ENCODE measurements at regions of chrX and their contacts with region 1.

Region 1: GRCh38 chrX:18425199-18426003 is at the start of gene CDKL5:
- DNase-seq: peak; percentile 94
- H3K4me3 ChIP-seq: peak within 1 kb of the TSS; percentile 66 to 79 (median 70)
- H3K27ac ChIP-seq: peak within 1 kb of the TSS; percentile 57
- H3K4me1 ChIP-seq: peaks cover 6% of the 10 kb centered on the region
- H3K27me3 ChIP-seq: peaks cover 4% of the 10 kb centered on the region
- CTCF ChIP-seq: no peak
- total RNA-seq, gene CDKL5: 8.3 to 10.1 TPM

Region 2: GRCh38 chrX:18578546-18578945 is 153.1 kb after region 1 on chrX:
- CTCF ChIA-PET with region 1: interaction called, 3 read pairs
- dilution Hi-C with region 1: no loop called
- in situ Hi-C with region 1: no loop called
- intact Hi-C with region 1: loop called (anchors 5 kb)
- DNase-seq: no peak
- H3K4me3 ChIP-seq: no peak overlapping the region
- H3K27ac ChIP-seq: no peak overlapping the region
- H3K4me1 ChIP-seq: peaks cover 7% of the 10 kb centered on the region
- H3K27me3 ChIP-seq: no peaks in the 10 kb centered on the region
- CTCF ChIP-seq: no peak

Region 3: DNA sequence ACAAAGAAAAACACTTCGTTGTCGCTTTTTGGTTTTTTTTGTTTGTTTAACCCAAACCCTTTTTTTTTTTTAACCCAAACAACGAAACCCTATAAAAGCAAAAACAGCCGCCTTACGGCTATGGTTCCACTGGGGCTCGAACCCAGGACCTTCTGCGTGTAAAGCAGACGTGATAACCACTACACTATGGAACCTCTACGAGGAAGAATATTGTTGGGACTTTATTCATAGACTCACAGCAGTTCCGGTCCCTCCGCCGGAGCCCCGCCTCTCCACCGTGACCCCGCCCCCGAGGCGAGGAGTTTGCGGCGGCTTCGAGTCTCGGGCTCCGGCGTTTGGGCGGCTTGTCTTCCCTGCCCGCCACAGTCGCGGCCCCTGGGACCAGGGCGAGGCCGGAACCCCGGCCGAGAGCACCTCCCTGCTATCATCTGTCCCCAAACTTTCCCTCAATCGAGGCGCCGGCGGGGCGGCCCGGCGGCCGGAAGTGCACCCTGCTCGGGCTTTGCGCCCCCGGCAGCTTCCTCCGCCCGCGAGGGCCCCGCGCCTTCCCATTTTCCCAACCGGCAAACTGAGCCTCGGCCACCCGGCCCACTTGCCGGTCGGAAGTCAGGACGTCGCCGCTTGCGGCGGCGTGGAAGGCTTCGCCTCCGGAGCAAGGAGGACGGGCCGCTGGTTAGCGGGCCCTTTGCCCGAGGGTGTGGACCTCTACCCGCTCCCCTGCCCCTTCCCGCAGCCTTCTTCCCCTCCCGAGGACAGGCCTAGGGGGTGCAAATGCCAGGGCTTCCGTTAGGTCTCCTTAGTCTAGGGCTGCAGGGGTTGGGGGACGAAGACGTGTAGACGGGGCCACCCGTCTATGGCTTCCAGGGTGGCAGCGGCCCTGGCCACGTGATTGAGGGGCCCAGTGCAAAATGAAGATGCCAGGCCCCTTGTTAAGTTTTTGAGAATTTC is 249.7 kb after region 1 on chrX:
- CTCF ChIA-PET with region 1: no interaction called
- dilution Hi-C with region 1: no loop called
- in situ Hi-C with region 1: no loop called
- intact Hi-C with region 1: loop called (anchors 2 kb)
- DNase-seq: peak; percentile 53
- H3K4me3 ChIP-seq: peak overlapping the region; percentile 57 to 66 (median 60)
- H3K27ac ChIP-seq: peak overlapping the region; percentile 20
- H3K4me1 ChIP-seq: no peaks in the 10 kb centered on the region
- H3K27me3 ChIP-seq: no peaks in the 10 kb centered on the region
- CTCF ChIP-seq: no peak

Region 4: GRCh38 chrX:18886344-18887161 is 461.2 kb after region 1 on chrX:
- CTCF ChIA-PET with region 1: no interaction called
- dilution Hi-C with region 1: no loop called
- in situ Hi-C with region 1: no loop called
- intact Hi-C with region 1: loop called (anchors 2 kb)
- DNase-seq: peak; percentile 45
- H3K4me3 ChIP-seq: peak overlapping the region; percentile 19 to 45 (median 37)
- H3K27ac ChIP-seq: no peak overlapping the region
- H3K4me1 ChIP-seq: peaks cover 15% of the 10 kb centered on the region
- H3K27me3 ChIP-seq: no peaks in the 10 kb centered on the region
- CTCF ChIP-seq: peak; percentile 44 to 62

Region 5: DNA sequence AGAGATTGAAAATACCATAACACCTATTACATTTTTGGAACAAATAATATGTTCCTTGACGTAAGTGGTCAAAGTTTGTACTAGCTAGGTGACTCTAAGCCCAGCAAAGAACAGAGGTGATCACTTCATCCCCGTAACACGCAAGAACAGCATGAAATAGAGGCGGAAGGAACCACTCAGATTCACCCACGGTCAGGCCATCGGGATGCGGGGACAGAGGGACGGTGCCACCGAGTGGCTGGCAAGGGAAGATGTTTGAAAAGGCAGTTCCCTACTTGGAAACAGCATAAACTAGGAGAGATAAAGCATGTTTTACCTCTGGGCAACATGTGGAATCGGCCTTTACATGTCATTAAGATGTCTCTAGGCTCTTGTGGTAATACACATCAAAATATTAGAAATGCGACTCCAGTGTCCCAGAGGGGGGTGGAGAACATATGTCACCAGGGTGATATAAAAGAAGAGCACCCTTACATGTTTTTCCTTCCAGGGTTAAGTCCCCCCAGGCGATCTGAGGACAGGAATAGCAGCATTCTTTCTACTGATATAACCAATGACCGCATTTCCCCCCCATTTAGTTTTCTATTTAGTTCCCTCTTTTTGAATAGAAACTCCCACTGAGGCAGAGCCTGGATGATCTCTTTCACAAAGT is 474.5 kb after region 1 on chrX:
- CTCF ChIA-PET with region 1: no interaction called
- dilution Hi-C with region 1: loop called (anchors 25 kb)
- in situ Hi-C with region 1: no loop called
- intact Hi-C with region 1: no loop called
- DNase-seq: no peak
- H3K4me3 ChIP-seq: no peak overlapping the region
- H3K27ac ChIP-seq: no peak overlapping the region
- H3K4me1 ChIP-seq: peaks cover 13% of the 10 kb centered on the region
- H3K27me3 ChIP-seq: no peaks in the 10 kb centered on the region
- CTCF ChIP-seq: peak in 1 of 2 donors; percentile 30

Measured in mammary epithelial cell (primary cell).